MCF 10A (cell line): ENCODE measurements at regions of chr2 and their contacts with region 1.

Region 1: GRCh38 chr2:85066874-85067351 is 66.3 kb upstream of the TCF7L1 start:
- DNase-seq: peak; percentile 79
- H3K4me3 Mint-ChIP-seq: no peak overlapping the region
- H3K27ac Mint-ChIP-seq: no peak overlapping the region
- H3K4me1 Mint-ChIP-seq: peaks cover 7% of the 10 kb centered on the region
- H3K27me3 Mint-ChIP-seq: peaks cover 11% of the 10 kb centered on the region
- CTCF ChIP-seq: peak; percentile 88

Region 2: GRCh38 chr2:85053802-85054201 is 13.1 kb before region 1 on chr2:
- CTCF ChIA-PET with region 1: interaction called, 32 read pairs
- POLR2A ChIA-PET with region 1: interaction called, 3 read pairs
- intact Hi-C with region 1: no loop called
- DNase-seq: peak; percentile 66
- H3K4me3 Mint-ChIP-seq: peak overlapping the region; percentile 6
- H3K27ac Mint-ChIP-seq: peak overlapping the region; percentile 68
- H3K4me1 Mint-ChIP-seq: peaks cover 25% of the 10 kb centered on the region
- H3K27me3 Mint-ChIP-seq: no peaks in the 10 kb centered on the region
- CTCF ChIP-seq: no peak

Region 3: GRCh38 chr2:85132834-85133637 is 66.1 kb after region 1 on chr2 and contains the start of gene TCF7L1:
- CTCF ChIA-PET with region 1: interaction called, 3 read pairs
- POLR2A ChIA-PET with region 1: no interaction called
- intact Hi-C with region 1: loop called (anchors 1 kb)
- DNase-seq: peak; percentile 58
- H3K4me3 Mint-ChIP-seq: peak within 1 kb of the TSS; percentile 80
- H3K27ac Mint-ChIP-seq: no peak within 1 kb of the TSS
- H3K4me1 Mint-ChIP-seq: no peaks in the 10 kb centered on the region
- H3K27me3 Mint-ChIP-seq: no peaks in the 10 kb centered on the region
- CTCF ChIP-seq: peak; percentile 59
- total RNA-seq, gene TCF7L1: 0.81 and 1.1 TPM in 2 replicates

Region 4: GRCh38 chr2:85181134-85181631 is 114.3 kb after region 1 on chr2:
- CTCF ChIA-PET with region 1: no interaction called
- POLR2A ChIA-PET with region 1: no interaction called
- intact Hi-C with region 1: no loop called
- DNase-seq: no peak
- H3K4me3 Mint-ChIP-seq: no peak overlapping the region
- H3K27ac Mint-ChIP-seq: no peak overlapping the region
- H3K4me1 Mint-ChIP-seq: no peaks in the 10 kb centered on the region
- H3K27me3 Mint-ChIP-seq: no peaks in the 10 kb centered on the region
- CTCF ChIP-seq: no peak

Region 5: GRCh38 chr2:85273738-85274731 is 207.1 kb after region 1 on chr2:
- CTCF ChIA-PET with region 1: interaction called, 24 read pairs
- POLR2A ChIA-PET with region 1: interaction called, 3 read pairs
- intact Hi-C with region 1: no loop called
- DNase-seq: peak; percentile 94
- H3K4me3 Mint-ChIP-seq: no peak overlapping the region
- H3K27ac Mint-ChIP-seq: no peak overlapping the region
- H3K4me1 Mint-ChIP-seq: peaks cover 7% of the 10 kb centered on the region
- H3K27me3 Mint-ChIP-seq: no peaks in the 10 kb centered on the region
- CTCF ChIP-seq: no peak

Region 6: GRCh38 chr2:85302121-85302520 is 235.2 kb after region 1 on chr2:
- CTCF ChIA-PET with region 1: interaction called, 219 read pairs
- POLR2A ChIA-PET with region 1: interaction called, 5 read pairs
- intact Hi-C with region 1: loop called (anchors 1 kb)
- DNase-seq: no peak
- H3K4me3 Mint-ChIP-seq: no peak overlapping the region
- H3K27ac Mint-ChIP-seq: no peak overlapping the region
- H3K4me1 Mint-ChIP-seq: no peaks in the 10 kb centered on the region
- H3K27me3 Mint-ChIP-seq: no peaks in the 10 kb centered on the region
- CTCF ChIP-seq: no peak